CD4-positive, alpha-beta memory T cell (primary cell): ENCODE measurements at regions of chr18 and their contacts with region 1.

Region 1: DNA sequence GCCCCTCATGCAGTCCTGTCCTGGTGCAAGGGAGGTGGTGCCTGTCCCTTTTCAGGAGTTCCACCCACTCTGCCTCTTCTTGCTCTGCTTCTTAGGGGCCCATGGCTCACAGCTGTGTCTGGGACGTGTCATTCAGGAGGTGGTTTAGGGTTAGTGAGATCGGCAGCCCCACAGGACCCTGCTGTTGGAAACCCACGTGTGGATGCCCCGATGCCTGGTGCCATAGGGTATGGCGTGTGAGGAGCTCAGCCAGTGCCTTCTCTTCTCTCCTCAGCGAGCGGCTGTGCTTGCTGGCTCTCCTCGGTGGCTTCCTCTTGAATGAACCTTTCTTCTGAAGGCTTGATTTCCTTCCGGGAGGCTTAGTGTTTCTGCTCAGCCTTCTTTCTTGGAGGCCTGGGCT is 55.2 kb downstream of the LDLRAD4 start:
- DNase-seq: peak in 4 of 5 donors; percentile 44 to 55 (median 52)
- H3K4me3 ChIP-seq: peak overlapping the region; percentile 43 to 66
- H3K4me3 Mint-ChIP-seq: peak overlapping the region; percentile 85 to 93 (median 88)
- H3K27ac ChIP-seq: peak overlapping the region; percentile 63
- H3K27ac Mint-ChIP-seq: peak overlapping the region; percentile 87 to 97 (median 95)
- H3K4me1 ChIP-seq: peaks cover 61% of the 10 kb centered on the region
- H3K4me1 Mint-ChIP-seq: peaks cover 42 to 72% (median 63%) of the 10 kb centered on the region in 4 donors
- H3K27me3 ChIP-seq: no peaks in the 10 kb centered on the region
- H3K27me3 Mint-ChIP-seq: no peaks in the 10 kb centered on the region

Region 2: DNA sequence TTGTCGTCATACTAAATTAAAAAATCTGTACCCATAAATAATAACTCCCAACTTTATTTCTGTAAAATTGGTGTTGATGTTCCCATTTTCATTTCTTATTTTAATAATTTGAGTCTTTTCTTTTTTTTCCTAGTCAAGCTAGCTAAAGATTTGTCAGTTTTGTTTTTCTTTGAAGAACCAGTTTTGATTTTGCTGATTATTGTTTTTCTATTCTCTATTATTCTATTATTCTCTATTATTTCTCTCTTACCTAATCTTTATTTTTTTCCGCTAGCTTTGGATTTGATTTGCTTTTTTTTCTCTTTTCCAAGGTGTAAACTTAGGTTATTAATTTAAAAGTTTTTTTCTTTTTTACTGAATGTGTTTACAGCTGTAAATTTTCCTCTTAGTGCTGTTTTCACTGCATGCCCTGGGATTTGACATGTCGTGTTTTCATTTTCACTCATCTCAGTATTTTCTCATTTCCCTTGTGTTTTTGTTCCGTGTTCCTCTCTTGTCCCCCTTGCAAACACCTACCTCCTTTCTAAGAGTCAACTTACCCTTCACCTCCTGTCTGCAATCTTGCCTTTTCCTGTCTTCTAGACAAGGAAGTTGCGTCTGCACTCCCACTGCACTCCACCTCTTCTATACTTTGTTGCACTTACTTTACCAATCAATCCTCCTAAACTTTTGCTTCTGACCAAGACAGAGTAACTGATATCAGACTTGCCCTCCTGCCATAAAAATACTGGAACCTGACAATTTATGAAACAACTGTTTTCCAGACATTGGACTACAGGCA is 552.1 kb before region 1 on chr18:
- CTCF ChIA-PET with region 1: no interaction called
- POLR2A ChIA-PET with region 1: no interaction called
- intact Hi-C with region 1: no loop called
- DNase-seq: no peak
- H3K4me3 ChIP-seq: no peak overlapping the region
- H3K4me3 Mint-ChIP-seq: no peak overlapping the region
- H3K27ac ChIP-seq: no peak overlapping the region
- H3K27ac Mint-ChIP-seq: peak overlapping the region; percentile 8 to 86 (median 63)
- H3K4me1 ChIP-seq: no peaks in the 10 kb centered on the region
- H3K4me1 Mint-ChIP-seq: peaks cover 0 to 7% (median 5%) of the 10 kb centered on the region in 4 donors
- H3K27me3 ChIP-seq: no peaks in the 10 kb centered on the region
- H3K27me3 Mint-ChIP-seq: no peaks in the 10 kb centered on the region

Region 3: GRCh38 chr18:13289481-13290205 is 15.8 kb after region 1 on chr18:
- CTCF ChIA-PET with region 1: no interaction called
- POLR2A ChIA-PET with region 1: interaction called, 8 read pairs
- intact Hi-C with region 1: loop called (anchors 2 kb)
- DNase-seq: no peak
- H3K4me3 ChIP-seq: no peak overlapping the region
- H3K4me3 Mint-ChIP-seq: peak overlapping the region in 4 of 8 donors; percentile 31 to 60 (median 44)
- H3K27ac ChIP-seq: no peak overlapping the region
- H3K27ac Mint-ChIP-seq: peak overlapping the region in 5 of 7 donors; percentile 37 to 90 (median 81)
- H3K4me1 ChIP-seq: peaks cover 26% of the 10 kb centered on the region
- H3K4me1 Mint-ChIP-seq: peaks cover 21 to 48% (median 35%) of the 10 kb centered on the region in 4 donors
- H3K27me3 ChIP-seq: no peaks in the 10 kb centered on the region
- H3K27me3 Mint-ChIP-seq: peaks cover 0 to 1% of the 10 kb centered on the region in 2 donors